ENCODE measurements at regions of chr15 and their contacts with region 1.

Region 1: GRCh38 chr15:65384895-65385858 is 7.4 kb upstream of the IGDCC3 start:
- DNase-seq: peak; percentile 85 to 91 (median 87)
- ATAC-seq: peak; percentile 93
- H3K4me3 ChIP-seq: peak overlapping the region in 1 of 2 donors; percentile 6
- H3K27ac ChIP-seq: no peak overlapping the region
- H3K4me1 ChIP-seq: peaks cover 13% of the 10 kb centered on the region
- H3K27me3 ChIP-seq: no peaks in the 10 kb centered on the region
- CTCF ChIP-seq: peak; percentile 78 to 93 (median 88)
- POLR2A ChIP-seq: no peak

Region 2: GRCh38 chr15:65318870-65319356 is 66.3 kb before region 1 on chr15:
- intact Hi-C with region 1: loop called (anchors 5 kb)
- DNase-seq: peak; percentile 83 to 86 (median 83)
- ATAC-seq: peak; percentile 98
- H3K4me3 ChIP-seq: no peak overlapping the region
- H3K27ac ChIP-seq: no peak overlapping the region
- H3K4me1 ChIP-seq: no peaks in the 10 kb centered on the region
- H3K27me3 ChIP-seq: no peaks in the 10 kb centered on the region
- CTCF ChIP-seq: peak; percentile 83 to 97 (median 95)
- POLR2A ChIP-seq: no peak

Measured in body of pancreas (tissue), 4 donors.